ENCODE measurements at regions of chr17 and their contacts with region 1.

Region 1: DNA sequence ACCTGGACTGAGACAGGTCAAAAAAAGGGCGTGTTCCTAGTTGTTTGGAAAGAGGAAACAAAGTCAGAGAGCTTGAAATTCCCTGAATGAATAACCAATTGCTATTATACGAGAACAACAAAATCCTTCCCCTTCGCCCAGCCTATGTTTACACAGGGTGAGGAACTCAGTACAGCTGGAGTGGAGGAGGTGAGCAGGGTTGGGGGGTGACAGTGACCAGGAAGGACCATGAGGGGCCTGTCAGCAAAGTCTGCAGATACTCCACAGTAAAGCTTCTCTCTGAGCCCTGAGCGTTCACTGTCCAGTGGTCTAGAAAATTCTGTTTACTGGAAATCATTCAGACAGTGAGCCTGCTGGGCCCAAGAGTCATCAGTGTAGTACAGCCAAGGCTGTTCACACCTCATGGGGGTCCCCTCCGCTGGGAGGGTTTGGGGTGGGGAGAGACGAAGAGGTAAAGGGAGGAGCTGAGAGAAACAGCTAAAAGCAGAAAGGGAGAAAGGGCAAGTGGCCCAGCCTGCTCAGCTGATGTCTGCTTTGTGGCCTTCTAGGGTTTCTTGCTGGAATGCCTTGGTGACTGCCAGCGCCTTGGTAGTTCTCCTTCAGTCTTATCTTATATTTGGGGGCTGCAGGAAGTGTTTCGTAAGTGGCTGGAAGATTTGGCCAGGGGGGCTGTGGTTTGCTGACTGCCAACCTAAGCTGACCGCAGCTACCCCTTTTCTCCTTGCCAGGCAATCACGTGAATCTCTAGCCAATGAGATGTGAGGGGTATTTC is 5.7 kb downstream of the DUSP3 start:
- DNase-seq: peak in 2 of 3 donors; percentile 63 to 68
- ATAC-seq: no peak
- H3K4me3 ChIP-seq: no peak overlapping the region
- H3K27ac ChIP-seq: no peak overlapping the region
- H3K4me1 ChIP-seq: peaks cover 14% of the 10 kb centered on the region
- H3K27me3 ChIP-seq: no peaks in the 10 kb centered on the region

Region 2: DNA sequence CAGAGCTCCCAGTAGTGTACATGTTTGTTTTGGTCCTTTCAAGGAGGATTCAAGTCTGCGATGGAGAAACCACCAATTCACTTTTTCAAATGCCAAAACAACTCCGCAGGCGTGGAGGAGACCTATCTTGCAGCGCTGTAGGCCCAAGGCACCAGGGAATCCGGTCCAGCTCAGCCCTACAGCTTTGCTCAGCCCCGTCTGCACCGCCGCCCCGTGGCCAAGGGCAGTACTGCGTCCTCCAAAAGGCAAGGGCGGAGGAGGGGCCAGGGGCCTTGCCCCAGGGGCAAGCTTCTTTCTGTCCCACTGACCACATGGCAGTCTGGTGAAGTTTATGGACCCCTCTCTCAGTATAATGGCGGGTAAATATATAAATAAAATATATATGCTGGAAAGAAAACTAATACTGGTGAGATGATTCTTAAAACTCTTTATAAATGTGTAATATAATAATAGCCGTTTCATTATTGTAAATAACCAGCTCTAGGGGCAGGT is 73.2 kb after region 1 on chr17:
- intact Hi-C with region 1: loop called in 1 of 4 experiments (anchors 5 kb)
- DNase-seq: peak; percentile 87 to 96 (median 96)
- ATAC-seq: peak; percentile 95
- H3K4me3 ChIP-seq: no peak overlapping the region
- H3K27ac ChIP-seq: no peak overlapping the region
- H3K4me1 ChIP-seq: no peaks in the 10 kb centered on the region
- H3K27me3 ChIP-seq: no peaks in the 10 kb centered on the region

Measured in right cardiac atrium (tissue), 5 donors.